MCF 10A (cell line): ENCODE measurements at regions of chr2 and their contacts with region 1.

Region 1: DNA sequence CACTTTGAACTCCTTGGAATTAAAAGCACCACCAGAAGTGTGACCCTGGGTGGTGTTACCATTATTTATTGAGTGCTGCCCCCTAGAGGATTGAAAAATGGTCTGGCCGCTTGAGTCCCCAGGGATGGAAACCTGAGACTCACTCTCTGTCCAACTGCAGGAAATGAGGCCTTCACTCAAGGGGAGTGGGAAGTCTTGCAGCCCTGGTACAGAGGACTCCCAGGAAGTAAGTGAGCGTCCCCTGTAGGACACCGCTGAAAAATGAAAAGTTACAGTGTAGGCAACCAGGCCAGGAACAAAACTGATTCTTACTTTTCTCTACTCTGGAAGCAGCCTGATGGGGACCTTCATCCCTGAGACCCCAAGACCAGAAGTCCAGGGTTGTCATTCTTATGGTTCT is 2.2 kb upstream of the NRP2 start:
- DNase-seq: peak; percentile 95
- H3K4me3 Mint-ChIP-seq: no peak overlapping the region
- H3K27ac Mint-ChIP-seq: no peak overlapping the region
- H3K4me1 Mint-ChIP-seq: peaks cover 25% of the 10 kb centered on the region
- H3K27me3 Mint-ChIP-seq: no peaks in the 10 kb centered on the region
- CTCF ChIP-seq: peak; percentile 61

Region 2: DNA sequence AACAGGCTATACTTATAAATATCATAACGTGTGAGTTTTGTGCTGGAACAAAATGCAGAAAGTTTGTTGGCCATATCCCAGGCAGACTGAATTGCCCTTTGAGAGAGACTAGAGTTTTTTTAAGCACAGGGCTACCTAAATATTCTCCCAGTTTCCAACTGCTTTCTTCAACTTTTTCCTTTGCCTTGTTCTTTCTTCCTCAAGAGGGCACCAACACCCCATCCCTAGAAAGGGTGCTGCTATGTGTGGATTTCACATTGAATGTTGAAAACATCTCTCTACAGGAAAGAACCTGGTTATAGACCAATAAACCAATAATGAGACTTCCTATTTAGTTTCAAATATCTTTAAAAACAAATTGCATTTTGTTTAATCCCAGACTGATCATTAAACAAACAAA is 1655.6 kb before region 1 on chr2:
- CTCF ChIA-PET with region 1: interaction called, 3 read pairs
- POLR2A ChIA-PET with region 1: interaction called, 4 read pairs
- intact Hi-C with region 1: loop called (anchors 5 kb)
- DNase-seq: peak; percentile 64
- H3K4me3 Mint-ChIP-seq: no peak overlapping the region
- H3K27ac Mint-ChIP-seq: no peak overlapping the region
- H3K4me1 Mint-ChIP-seq: peaks cover 6% of the 10 kb centered on the region
- H3K27me3 Mint-ChIP-seq: no peaks in the 10 kb centered on the region
- CTCF ChIP-seq: peak; percentile 67

Region 3: DNA sequence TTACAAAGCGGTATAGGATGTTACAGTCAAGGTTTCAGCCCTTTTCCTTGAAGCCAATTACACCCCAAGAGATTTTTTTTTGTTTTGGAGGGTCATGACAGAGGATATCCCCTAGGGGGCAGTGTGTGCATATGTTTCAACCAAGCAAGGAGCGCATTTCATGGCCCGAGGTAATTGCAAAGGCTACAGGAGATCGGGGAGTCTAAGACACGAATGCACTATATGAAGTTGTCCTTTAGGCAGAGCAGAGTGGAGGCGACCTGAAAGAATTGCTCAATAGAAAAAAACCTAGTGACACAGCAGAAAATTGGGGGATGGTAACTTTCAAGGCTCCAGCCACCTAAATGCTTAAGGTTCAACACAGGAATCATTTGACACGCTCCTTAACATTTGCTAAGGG is 1354.6 kb before region 1 on chr2:
- CTCF ChIA-PET with region 1: interaction called, 8 read pairs
- POLR2A ChIA-PET with region 1: interaction called, 3 read pairs
- intact Hi-C with region 1: loop called (anchors 1 kb)
- DNase-seq: peak; percentile 85
- H3K4me3 Mint-ChIP-seq: no peak overlapping the region
- H3K27ac Mint-ChIP-seq: no peak overlapping the region
- H3K4me1 Mint-ChIP-seq: peaks cover 11% of the 10 kb centered on the region
- H3K27me3 Mint-ChIP-seq: no peaks in the 10 kb centered on the region
- CTCF ChIP-seq: peak; percentile 73

Region 4: GRCh38 chr2:204691911-204692510 is 988.1 kb before region 1 on chr2:
- CTCF ChIA-PET with region 1: interaction called, 10 read pairs
- POLR2A ChIA-PET with region 1: interaction called, 5 read pairs
- intact Hi-C with region 1: loop called (anchors 5 kb)
- DNase-seq: peak; percentile 86
- H3K4me3 Mint-ChIP-seq: no peak overlapping the region
- H3K27ac Mint-ChIP-seq: no peak overlapping the region
- H3K4me1 Mint-ChIP-seq: peaks cover 4% of the 10 kb centered on the region
- H3K27me3 Mint-ChIP-seq: no peaks in the 10 kb centered on the region
- CTCF ChIP-seq: peak; percentile 76

Region 5: DNA sequence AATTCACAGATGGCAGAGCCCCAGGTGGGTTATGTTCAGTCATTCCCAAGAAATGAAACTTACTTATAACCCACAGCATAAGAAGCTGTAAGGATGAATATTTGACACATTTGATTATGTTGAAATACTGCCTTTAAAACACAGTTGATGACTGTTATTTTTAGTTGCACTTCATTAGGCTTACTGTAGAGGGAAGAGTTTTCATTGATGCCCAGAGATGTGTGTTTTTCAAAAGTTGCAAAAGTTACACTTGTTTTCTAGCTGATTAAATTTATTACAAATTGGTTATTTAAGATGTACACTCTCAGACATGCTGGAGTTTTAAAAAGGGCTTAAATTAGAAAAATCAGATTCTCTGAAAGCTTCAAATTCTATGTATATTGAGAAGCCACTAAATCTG is 628.6 kb before region 1 on chr2:
- CTCF ChIA-PET with region 1: interaction called, 3 read pairs
- POLR2A ChIA-PET with region 1: no interaction called
- intact Hi-C with region 1: loop called (anchors 5 kb)
- DNase-seq: peak; percentile 5
- H3K4me3 Mint-ChIP-seq: no peak overlapping the region
- H3K27ac Mint-ChIP-seq: no peak overlapping the region
- H3K4me1 Mint-ChIP-seq: no peaks in the 10 kb centered on the region
- H3K27me3 Mint-ChIP-seq: no peaks in the 10 kb centered on the region
- CTCF ChIP-seq: peak; percentile 17

Region 6: DNA sequence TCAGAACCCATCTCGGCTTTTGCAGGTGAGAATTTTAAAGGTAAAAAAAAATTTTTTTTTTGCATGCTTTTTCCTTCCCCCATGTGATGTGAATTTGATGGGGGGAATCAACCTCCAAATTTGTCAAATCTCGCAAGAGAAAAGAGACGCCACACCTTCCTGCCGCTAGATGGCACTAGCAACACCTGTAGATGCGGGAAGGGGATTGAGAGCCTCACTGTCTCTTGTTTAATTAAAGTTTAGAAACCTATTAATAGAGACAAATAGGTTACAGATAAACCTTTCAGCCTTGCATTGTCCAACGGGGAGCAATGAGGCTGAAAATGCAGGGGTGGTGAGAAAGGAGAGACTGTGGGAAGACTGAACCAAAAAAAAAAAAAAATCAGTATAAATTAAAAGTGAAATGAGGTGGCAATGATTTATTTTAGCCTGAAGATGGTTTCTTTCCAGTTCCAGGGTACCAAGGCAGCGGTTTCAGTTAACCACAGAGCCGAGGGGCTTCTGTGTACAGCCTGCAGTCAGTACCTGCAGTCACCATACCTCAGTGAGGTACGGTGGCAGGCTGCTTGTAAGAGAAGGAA is 86.8 kb after region 1 on chr2:
- CTCF ChIA-PET with region 1: no interaction called
- POLR2A ChIA-PET with region 1: interaction called, 3 read pairs
- intact Hi-C with region 1: loop called (anchors 5 kb)
- DNase-seq: peak; percentile 70
- H3K4me3 Mint-ChIP-seq: no peak overlapping the region
- H3K27ac Mint-ChIP-seq: no peak overlapping the region
- H3K4me1 Mint-ChIP-seq: peaks cover 19% of the 10 kb centered on the region
- H3K27me3 Mint-ChIP-seq: no peaks in the 10 kb centered on the region
- CTCF ChIP-seq: peak; percentile 79